ENCODE measurements at regions of chr20 and their contacts with region 1.

Region 1: DNA sequence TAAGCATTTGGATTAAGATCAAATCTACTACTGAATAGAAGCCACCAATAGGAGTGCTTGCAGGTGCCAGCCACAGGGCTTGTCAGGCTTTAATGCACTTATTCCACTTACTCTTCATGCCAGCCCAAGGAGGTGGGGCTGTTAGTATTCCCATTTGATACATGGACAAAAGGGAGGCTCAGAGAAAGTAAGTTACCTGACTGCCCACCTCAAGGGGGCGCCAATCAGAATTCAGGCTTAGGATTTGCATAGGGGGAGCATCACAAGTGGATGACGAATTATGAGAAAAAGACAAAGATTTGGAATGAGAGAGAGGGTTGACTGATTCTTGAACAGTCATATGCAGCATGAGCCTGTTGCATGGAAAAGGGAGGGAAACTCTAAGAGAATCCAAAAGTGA is 188.4 kb upstream of the TSHZ2 start:
- DNase-seq: no peak
- H3K27ac ChIP-seq: no peak overlapping the region
- CTCF ChIP-seq: no peak

Region 2: DNA sequence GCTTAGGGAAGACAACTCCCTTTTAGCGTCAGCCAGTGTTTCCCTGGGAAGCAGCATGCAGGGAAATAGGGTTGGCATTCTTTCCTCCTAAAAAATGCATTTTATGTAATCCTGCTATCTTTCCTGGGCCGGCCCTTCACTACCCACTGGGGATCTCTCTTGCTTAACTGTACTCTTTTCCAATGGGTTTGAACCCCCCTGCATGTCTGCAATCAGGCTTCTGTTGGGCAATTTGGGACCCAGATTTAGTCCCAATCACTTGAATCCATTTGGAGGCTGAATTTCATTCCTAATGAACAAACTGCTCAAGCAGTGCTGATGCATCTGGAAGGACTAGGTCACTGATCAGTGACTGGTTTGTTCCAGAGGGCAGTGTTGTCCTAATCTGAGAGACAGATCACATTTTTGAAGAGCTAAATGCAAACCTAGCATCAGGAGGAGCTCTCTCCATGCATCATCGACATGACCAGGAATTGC is 340.3 kb after region 1 on chr20:
- CTCF ChIA-PET with region 1: no interaction called
- POLR2A ChIA-PET with region 1: no interaction called
- DNase-seq: no peak
- H3K27ac ChIP-seq: no peak overlapping the region
- CTCF ChIP-seq: no peak

Region 3: DNA sequence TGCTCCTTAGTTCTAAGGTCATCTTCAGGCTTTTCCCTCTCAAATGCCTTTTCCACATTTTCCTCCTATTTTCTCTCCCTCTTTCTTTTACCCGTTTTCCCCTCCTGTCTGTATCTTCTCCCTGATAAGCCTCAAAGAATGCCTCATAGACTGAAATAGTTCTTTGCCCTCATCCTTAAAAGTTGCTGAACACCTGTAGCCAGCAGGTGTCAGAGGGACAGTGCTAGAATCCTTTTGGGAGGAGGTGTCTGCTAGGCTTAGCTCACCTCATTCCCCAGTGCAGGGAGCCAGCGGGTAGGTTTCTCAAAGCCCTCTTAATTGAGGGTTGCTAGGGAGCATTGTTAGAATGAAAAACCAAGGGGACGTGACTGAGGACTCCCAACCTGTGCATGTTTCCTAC is 392.4 kb after region 1 on chr20:
- CTCF ChIA-PET with region 1: no interaction called
- POLR2A ChIA-PET with region 1: interaction called, 10 read pairs
- DNase-seq: no peak
- H3K27ac ChIP-seq: no peak overlapping the region
- CTCF ChIP-seq: no peak

Measured in RWPE1 (cell line).